ENCODE measurements at regions of chr6 and their contacts with region 1.

Region 1: GRCh38 chr6:28136585-28137504 is 4.8 kb upstream of the ZKSCAN8 start:
- H3K4me3 Mint-ChIP-seq: peak overlapping the region; percentile 91
- H3K27ac Mint-ChIP-seq: peak overlapping the region; percentile 92
- H3K4me1 Mint-ChIP-seq: peaks cover 53% of the 10 kb centered on the region
- H3K27me3 Mint-ChIP-seq: no peaks in the 10 kb centered on the region

Region 2: GRCh38 chr6:27575594-27576361 is 561.1 kb before region 1 on chr6:
- intact Hi-C with region 1: no loop called
- H3K4me3 Mint-ChIP-seq: no peak overlapping the region
- H3K27ac Mint-ChIP-seq: no peak overlapping the region
- H3K4me1 Mint-ChIP-seq: no peaks in the 10 kb centered on the region
- H3K27me3 Mint-ChIP-seq: peaks cover 13% of the 10 kb centered on the region

Region 3: GRCh38 chr6:27902335-27903314 is 234.2 kb before region 1 on chr6:
- intact Hi-C with region 1: loop called (anchors 10 kb)
- H3K4me3 Mint-ChIP-seq: peak overlapping the region; percentile 78
- H3K27ac Mint-ChIP-seq: peak overlapping the region; percentile 66
- H3K4me1 Mint-ChIP-seq: no peaks in the 10 kb centered on the region
- H3K27me3 Mint-ChIP-seq: peaks cover 6% of the 10 kb centered on the region

Region 4: GRCh38 chr6:27977387-27977786 is 159.5 kb before region 1 on chr6:
- intact Hi-C with region 1: no loop called
- H3K4me3 Mint-ChIP-seq: no peak overlapping the region
- H3K27ac Mint-ChIP-seq: no peak overlapping the region
- H3K4me1 Mint-ChIP-seq: no peaks in the 10 kb centered on the region
- H3K27me3 Mint-ChIP-seq: peaks cover 3% of the 10 kb centered on the region

Region 5: DNA sequence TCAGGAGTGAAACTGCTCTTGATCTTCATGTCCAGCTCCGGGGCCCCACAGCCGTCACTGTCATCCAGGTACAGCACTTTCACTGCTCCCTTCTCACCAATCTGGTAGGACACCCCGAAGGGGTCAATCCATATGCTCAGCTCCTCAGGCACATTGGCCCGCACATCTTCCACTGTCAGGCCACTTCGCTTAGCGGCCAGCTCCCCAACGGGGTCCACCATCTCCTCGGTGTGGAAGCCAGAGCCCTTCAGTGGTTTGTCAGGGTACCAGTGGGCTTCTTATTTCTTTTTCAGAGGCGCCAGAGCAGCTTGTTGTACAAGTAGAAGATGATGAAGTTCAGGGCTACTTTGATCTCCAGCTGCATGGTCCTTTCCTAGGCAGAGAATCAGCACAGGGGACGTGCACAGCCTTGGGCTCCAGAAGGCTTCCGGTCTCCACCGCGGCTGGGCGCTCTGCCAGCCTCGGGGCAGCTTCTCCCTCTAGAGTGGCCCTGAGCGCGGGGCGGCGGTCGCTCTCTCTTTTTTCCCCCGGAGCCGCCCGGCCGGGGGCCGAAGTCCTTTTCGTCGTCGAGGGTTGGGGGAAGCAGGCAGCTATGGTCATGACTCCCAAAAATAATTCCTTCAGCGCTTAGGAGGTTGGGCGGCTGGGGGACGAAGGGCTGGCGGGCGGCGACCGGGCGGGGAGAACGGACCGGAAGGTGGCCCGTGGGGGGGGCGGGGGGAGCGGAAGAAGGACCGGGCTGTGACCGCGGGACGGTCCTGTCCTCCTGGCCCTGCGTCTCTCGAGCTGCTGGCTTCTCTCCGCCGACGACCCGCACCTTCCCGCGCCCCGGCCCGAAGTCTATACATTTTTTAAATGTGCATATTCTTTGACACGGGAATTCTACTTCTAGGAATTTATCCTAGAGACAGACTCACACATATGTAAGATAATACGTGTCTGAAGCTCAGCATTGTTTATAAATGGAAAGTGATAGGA is 81.7 kb after region 1 on chr6:
- intact Hi-C with region 1: loop called (anchors 5 kb)
- H3K4me3 Mint-ChIP-seq: peak overlapping the region; percentile 82
- H3K27ac Mint-ChIP-seq: peak overlapping the region; percentile 90
- H3K4me1 Mint-ChIP-seq: peaks cover 19% of the 10 kb centered on the region
- H3K27me3 Mint-ChIP-seq: peaks cover 59% of the 10 kb centered on the region

Region 6: DNA sequence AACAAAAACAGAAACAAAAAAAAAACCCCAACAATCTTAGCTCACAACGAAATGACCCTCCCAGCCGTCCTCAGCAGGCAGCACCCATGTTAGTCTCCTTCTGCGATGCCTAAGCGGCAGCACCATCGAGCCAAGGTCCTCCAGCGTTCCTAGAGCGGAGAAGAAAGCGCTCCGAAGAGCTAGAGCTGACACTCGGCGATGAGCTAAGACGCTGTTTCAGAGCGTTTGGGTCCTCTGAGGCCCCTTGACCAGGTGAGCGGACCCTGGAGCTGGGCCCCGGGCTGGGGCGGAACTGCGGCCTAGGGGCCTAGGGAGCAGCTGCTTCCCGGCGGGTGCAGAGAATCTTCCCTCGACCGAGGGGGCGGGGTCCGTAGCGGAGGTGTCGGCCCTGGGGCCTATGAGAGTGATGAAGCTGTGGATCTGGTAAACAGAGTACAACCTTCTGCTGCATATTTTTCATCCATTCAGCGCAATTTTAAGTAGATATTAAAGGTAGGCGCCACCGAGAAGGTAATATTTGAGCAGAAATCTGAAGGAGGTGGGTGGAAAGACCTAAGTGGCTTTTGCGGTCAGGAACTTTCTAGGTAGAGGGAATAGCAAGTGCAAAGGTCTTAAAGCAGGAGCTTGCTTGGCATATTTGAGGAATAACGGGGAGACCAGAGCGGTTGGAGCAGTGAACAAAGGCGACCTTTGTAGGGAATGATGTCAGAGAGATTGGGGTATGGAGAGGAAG is 130.3 kb after region 1 on chr6 and contains the start of gene ZSCAN26:
- intact Hi-C with region 1: loop called (anchors 2 kb)
- H3K4me3 Mint-ChIP-seq: no peak within 1 kb of the TSS
- H3K27ac Mint-ChIP-seq: no peak within 1 kb of the TSS
- H3K4me1 Mint-ChIP-seq: no peaks in the 10 kb centered on the region
- H3K27me3 Mint-ChIP-seq: no peaks in the 10 kb centered on the region

Region 7: DNA sequence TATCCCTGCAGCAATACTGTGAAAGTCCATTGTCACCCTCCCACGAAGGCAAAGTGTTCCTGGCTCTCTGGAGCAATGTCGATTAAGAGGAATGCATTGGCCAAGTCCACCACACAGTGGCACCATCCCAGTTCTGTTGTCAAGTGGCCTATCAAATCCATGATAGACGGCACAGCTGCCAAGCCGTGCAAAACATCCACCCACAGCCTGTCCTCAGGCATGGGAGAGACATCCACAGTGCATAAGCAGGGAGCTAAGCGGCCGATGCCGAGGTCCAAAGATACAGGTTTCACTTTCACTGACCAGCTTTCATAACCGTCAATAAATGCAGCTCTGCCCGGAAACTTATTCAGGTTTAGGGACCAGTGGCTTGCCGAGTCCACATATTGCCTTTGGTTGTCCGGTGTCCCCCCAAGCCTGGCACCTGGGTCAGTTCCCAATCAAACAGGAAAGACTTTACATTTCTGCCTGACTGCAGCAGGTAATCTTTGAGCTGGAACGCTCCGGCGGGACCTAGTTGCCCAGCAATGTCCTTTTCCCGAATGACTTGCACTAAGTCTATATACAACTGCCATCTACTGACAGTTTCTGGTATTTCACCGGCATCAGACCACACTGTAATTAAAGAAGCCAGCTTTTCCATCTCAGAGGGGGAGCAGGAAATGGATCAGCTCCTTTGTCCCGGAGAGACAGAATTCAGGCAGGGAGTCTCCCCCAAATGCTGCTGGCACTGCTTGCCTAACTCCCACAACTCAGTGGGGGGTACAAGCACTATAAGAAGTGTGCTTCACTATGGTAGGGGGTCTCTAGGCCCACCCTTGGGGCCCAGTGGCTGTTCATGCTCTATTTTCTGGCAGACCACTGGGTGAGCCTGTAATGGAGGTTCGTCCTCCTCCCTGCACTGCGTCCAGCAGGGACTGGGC is 219.2 kb after region 1 on chr6:
- intact Hi-C with region 1: loop called (anchors 1 kb)
- H3K4me3 Mint-ChIP-seq: peak overlapping the region; percentile 82
- H3K27ac Mint-ChIP-seq: peak overlapping the region; percentile 87
- H3K4me1 Mint-ChIP-seq: peaks cover 62% of the 10 kb centered on the region
- H3K27me3 Mint-ChIP-seq: no peaks in the 10 kb centered on the region